ENCODE measurements at regions of chr10 and their contacts with region 1.

Region 1: DNA sequence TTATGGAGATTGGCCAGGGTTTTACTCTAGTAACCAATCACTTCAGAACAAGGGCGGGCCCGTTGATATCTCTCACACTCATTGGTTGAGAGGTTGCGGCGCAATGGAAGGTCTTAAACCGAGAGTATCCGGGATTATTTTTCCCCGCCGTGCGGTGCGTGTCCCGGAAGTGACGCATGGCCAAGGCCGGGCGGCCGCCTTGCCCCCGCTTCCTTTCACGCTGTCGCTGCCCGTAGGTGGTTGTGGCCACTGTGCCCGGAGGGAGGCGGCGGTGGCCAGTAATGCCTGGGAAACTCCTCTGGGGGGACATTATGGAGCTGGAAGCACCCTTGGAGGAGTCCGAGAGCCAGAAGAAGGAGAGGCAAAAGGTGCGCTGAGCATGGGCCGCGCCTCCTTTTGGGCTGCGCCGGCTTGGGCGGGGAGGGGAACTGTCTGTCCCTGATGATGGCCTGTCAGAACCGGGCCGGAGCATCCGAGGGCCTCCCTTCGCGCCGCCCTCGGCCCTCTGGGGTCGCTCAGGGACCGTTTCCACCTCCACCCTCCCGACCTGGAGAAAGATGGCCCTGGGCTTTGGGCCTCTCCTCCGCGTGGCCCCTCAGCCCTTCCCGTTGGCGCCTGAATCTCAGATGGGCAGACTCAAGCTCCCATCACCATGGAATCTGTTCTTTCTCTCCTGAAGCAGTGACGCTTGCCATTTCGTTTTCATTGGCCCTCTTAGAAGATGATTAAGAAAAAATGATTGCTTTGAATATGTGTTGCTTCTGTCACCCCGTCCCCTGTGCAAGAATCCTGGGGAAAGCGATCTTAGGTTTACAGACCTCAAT is at the start of gene DDX50:
- DNase-seq: peak; percentile 93 to 98 (median 96)
- H3K4me3 ChIP-seq: peak within 1 kb of the TSS; percentile 60
- H3K27ac ChIP-seq: peak within 1 kb of the TSS; percentile 96 to 99
- H3K4me1 ChIP-seq: no peaks in the 10 kb centered on the region
- H3K27me3 ChIP-seq: no peaks in the 10 kb centered on the region
- CTCF ChIP-seq: peak in 1 of 3 donors; percentile 25
- EP300 ChIP-seq: no peak
- POLR2A ChIP-seq: peak; percentile 65
- total RNA-seq, gene DDX50: 27.8 to 52.2 (median 46.3) TPM

Region 2: GRCh38 chr10:68406815-68407548 is 494.3 kb before region 1 on chr10 and contains the start of gene RUFY2:
- intact Hi-C with region 1: loop called in 1 of 4 experiments (anchors 10 kb)
- DNase-seq: peak; percentile 81 to 91 (median 88)
- H3K4me3 ChIP-seq: peak within 1 kb of the TSS; percentile 98
- H3K27ac ChIP-seq: peak within 1 kb of the TSS; percentile 95 to 96
- H3K4me1 ChIP-seq: no peaks in the 10 kb centered on the region
- H3K27me3 ChIP-seq: no peaks in the 10 kb centered on the region
- CTCF ChIP-seq: peak; percentile 46 to 99 (median 96)
- EP300 ChIP-seq: no peak
- POLR2A ChIP-seq: peak; percentile 64
- total RNA-seq, gene RUFY2: 21.1 to 36.4 (median 29.8) TPM

Region 3: DNA sequence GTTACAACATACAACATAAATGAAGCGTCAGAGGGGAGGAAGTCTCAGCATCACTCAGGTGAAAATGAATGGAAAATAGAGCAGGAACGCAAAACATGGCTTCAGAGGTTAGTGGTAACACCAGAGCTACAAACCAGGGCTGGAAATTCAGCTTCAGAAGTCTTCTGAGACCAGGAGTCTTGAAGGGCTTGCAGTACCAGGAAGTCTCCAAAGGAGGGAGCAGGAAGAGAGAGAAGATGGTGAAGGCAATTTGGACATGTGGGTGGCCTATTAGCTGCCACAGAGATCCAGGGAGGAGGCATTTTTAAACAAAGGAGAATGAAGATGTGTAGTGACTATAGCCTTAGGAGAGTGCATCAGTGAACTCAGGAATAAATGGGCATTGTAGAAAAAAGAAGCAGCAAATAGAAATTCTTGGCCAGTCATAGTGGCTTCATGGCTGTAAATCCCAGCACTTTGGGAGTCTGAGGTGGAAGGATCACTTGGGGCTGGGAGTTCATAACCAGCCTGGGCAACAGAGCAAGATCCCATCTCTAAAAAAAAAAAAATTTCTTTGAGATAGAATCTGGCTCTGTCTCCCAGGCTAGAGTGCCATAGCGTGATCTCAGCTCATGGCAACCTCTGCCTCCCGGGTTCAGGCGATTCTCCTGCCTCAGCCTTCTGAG is 350.4 kb before region 1 on chr10:
- intact Hi-C with region 1: loop called in 2 of 4 experiments (anchors 10 kb)
- DNase-seq: peak in 3 of 5 donors; percentile 18 to 66 (median 35)
- H3K4me3 ChIP-seq: no peak overlapping the region
- H3K27ac ChIP-seq: no peak overlapping the region
- H3K4me1 ChIP-seq: no peaks in the 10 kb centered on the region
- H3K27me3 ChIP-seq: no peaks in the 10 kb centered on the region
- CTCF ChIP-seq: peak; percentile 44 to 49 (median 45)
- EP300 ChIP-seq: no peak
- POLR2A ChIP-seq: no peak

Region 4: DNA sequence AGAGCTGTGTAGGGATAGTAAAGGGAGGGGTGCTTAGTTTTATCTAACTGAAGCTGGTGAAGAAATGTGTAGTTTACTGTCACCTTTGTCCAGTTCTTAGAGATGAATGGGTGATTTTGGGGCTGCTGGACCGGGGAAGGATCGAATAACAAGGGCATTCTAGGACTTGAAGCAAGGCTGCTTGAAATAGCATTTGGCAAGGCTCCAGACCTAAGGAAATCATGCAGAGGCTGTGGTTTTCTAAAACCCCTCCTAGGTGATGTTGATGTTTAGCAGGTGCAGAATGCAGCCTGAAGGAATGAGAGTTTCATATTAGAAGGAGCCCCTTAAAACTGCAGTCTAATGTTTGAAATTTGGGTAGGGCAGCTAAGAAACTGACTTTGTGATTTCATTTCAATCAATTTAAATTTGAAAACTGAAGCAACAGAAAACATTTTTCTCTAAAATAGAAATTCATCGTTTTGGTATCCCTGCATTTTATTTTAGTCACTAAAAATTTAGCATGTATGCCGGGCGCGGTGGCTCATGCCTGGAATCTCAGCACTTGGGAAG is 272.7 kb before region 1 on chr10:
- intact Hi-C with region 1: no loop called
- DNase-seq: no peak
- H3K4me3 ChIP-seq: no peak overlapping the region
- H3K27ac ChIP-seq: no peak overlapping the region
- H3K4me1 ChIP-seq: peaks cover 2% of the 10 kb centered on the region
- H3K27me3 ChIP-seq: no peaks in the 10 kb centered on the region
- CTCF ChIP-seq: no peak
- EP300 ChIP-seq: no peak
- POLR2A ChIP-seq: no peak

Region 5: GRCh38 chr10:69408318-69409175 is 507.2 kb after region 1 on chr10:
- intact Hi-C with region 1: loop called in 1 of 4 experiments (anchors 10 kb)
- DNase-seq: peak; percentile 97 to 98 (median 97)
- H3K4me3 ChIP-seq: peak overlapping the region; percentile 47
- H3K27ac ChIP-seq: peak overlapping the region; percentile 66 to 92
- H3K4me1 ChIP-seq: peaks cover 6% of the 10 kb centered on the region
- H3K27me3 ChIP-seq: no peaks in the 10 kb centered on the region
- CTCF ChIP-seq: peak; percentile 42 to 87 (median 43)
- EP300 ChIP-seq: no peak
- POLR2A ChIP-seq: no peak

Measured in ovary (tissue), 10 donors.